ENCODE measurements at regions of chr6 and their contacts with region 1.

Region 1: DNA sequence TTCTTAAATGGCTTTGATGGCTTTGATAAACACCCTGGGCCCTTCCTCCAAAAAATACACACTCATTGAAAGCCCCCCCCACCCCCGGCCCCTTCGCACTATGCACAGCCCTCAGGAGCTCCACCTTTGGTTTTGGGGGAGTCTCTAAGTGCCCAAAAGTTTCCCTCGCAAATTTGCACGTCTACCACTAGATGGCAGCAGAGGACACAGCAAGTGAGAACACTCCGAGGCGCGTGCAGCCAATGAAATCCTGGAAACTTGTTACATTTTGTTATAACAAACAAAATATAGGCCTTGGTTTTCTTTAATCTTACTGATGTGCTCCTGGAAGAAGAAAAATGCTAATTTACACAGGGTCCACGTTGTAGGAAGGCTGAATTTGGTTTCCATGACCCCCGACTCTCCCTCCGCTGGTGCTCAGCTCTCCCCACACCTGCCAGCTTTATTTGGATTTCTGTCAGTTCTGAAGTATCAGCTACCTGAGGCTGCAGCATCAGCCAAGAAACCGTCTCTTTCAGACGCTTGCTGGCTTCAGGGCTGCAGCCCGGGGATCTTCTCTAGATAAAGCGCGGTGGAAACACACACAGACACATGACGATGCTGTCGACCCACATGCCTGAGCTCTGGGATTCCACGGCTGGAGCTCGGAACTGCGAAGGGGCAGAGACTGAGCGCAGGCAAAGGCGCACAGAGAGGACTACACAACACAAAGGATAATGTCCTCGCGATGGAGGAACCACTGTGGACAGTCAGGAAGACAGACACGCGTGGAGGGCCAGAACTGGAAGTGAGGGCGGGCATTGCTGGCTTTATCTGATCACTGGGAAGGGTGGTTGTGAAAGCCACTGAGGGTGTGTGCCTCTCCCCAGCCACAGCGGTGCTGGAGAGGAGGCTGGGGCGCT is 148.4 kb upstream of the RPS6KA2 start:
- DNase-seq: peak; percentile 53 to 66
- ATAC-seq: peak; percentile 74 to 87; a peak in 5 of 6 replicates
- H3K4me3 ChIP-seq: no peak overlapping the region
- H3K27ac ChIP-seq: no peak overlapping the region
- H3K4me1 ChIP-seq: no peaks in the 10 kb centered on the region
- CTCF ChIP-seq: peak; percentile 77
- EP300 ChIP-seq: no peak
- POLR2A ChIP-seq: no peak
- RAD21 ChIP-seq: peak; percentile 63 to 80

Region 2: DNA sequence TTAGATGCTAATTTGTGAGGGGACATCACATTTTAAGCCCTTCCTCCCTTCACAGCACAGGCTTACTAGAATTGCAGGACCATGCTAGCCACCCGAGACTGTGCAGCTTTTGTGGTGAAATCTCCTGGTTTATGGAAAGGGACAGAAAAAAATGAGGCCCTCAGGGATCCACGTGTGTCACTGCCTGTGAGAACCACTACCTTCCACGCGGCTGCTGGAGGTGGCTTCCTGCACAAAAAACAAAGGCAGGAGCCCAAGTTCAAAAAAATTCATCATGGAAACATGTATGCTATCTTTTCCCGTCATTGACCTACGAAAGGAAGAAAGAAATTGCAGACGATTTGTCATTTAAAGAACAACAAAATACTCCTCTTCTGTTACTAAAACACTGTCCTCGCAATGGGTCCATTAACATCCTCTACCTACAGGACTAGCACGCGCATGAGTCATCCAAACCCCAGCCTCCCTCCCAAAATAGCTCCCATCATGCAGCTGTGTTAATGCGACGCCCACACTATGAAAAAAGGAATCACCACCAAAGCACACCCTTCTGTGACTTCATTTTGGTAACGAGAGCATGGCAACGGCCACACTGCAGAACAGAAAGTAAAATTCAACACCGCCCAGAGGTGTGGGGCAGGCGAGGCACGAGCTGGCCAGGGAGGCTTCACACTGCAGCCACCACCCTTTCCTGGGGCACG is 234.7 kb before region 1 on chr6:
- CTCF ChIA-PET with region 1: no interaction called
- POLR2A ChIA-PET with region 1: no interaction called
- DNase-seq: no peak
- ATAC-seq: no peak
- H3K4me3 ChIP-seq: no peak overlapping the region
- H3K27ac ChIP-seq: no peak overlapping the region
- H3K4me1 ChIP-seq: no peaks in the 10 kb centered on the region
- CTCF ChIP-seq: no peak
- EP300 ChIP-seq: no peak
- POLR2A ChIP-seq: no peak
- RAD21 ChIP-seq: no peak

Region 3: DNA sequence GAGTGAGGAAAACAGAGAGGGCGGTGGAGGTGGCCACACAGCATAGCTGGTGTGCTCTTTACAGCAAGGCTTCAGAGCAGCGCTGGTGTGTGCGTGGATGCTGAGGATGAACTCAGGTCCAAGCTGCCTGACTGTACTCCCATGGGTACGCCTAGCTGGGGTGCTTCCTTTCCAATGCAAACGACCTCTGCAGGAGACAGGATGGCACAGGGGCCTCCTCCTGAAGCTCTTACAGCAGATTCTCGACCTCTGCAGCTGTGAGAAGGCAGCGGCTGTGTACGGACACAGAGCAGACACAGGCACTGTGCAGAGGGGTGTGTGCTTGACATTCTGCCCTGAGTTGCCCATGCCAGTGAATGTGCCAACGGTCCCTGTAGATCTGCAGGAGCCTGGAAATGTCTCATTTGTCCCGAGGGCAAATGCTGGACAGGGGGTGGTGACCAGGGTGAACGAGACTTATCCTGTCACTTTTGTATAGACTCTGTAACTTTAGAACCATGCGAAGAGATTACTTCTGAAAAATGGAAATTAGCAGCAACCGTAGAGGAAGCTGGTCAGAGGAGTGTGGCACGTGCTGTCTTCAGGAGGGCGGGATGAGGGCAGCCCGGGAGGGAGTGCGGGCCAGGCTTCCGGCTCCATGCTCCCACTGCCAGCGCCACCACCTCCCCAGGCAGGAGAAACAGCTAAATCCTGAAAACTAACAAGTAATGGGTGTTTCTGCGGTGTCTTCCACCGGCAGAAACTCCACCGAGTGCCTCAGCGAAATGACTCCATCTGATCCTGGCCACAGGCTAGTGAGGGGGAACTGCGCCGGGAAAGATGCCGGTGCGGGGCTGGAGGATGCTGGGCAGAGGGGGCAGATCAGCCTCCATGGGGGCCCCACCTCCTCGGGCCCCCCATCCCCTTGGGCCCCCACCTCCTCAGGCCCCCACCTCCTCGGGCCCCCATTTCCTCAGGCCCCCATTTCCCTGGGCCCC is 27.5 kb before region 1 on chr6:
- CTCF ChIA-PET with region 1: interaction called, 15 read pairs
- POLR2A ChIA-PET with region 1: no interaction called
- DNase-seq: peak in 1 of 2 experiments; percentile 14
- ATAC-seq: peak; percentile 54 to 73; a peak in 5 of 6 replicates
- H3K4me3 ChIP-seq: no peak overlapping the region
- H3K27ac ChIP-seq: no peak overlapping the region
- H3K4me1 ChIP-seq: no peaks in the 10 kb centered on the region
- CTCF ChIP-seq: no peak
- EP300 ChIP-seq: no peak
- POLR2A ChIP-seq: no peak
- RAD21 ChIP-seq: no peak

Region 4: GRCh38 chr6:166786704-166787293 is 11.4 kb after region 1 on chr6:
- CTCF ChIA-PET with region 1: interaction called, 15 read pairs
- POLR2A ChIA-PET with region 1: no interaction called
- DNase-seq: peak; percentile 31 to 63
- ATAC-seq: peak in 1 of 2 experiments; percentile 77; a peak in 4 of 6 replicates
- H3K4me3 ChIP-seq: no peak overlapping the region
- H3K27ac ChIP-seq: no peak overlapping the region
- H3K4me1 ChIP-seq: no peaks in the 10 kb centered on the region
- CTCF ChIP-seq: peak; percentile 62
- EP300 ChIP-seq: no peak
- POLR2A ChIP-seq: no peak
- RAD21 ChIP-seq: peak; percentile 59 to 64

Region 5: GRCh38 chr6:166981323-166981722 is 205.9 kb after region 1 on chr6:
- CTCF ChIA-PET with region 1: interaction called, 11 read pairs
- POLR2A ChIA-PET with region 1: no interaction called
- DNase-seq: no peak
- ATAC-seq: no peak
- H3K4me3 ChIP-seq: no peak overlapping the region
- H3K27ac ChIP-seq: no peak overlapping the region
- H3K4me1 ChIP-seq: no peaks in the 10 kb centered on the region
- CTCF ChIP-seq: no peak
- EP300 ChIP-seq: no peak
- POLR2A ChIP-seq: no peak
- RAD21 ChIP-seq: no peak

Region 6: GRCh38 chr6:167141667-167142432 is 366.4 kb after region 1 on chr6:
- CTCF ChIA-PET with region 1: interaction called, 32 read pairs
- POLR2A ChIA-PET with region 1: no interaction called
- DNase-seq: peak; percentile 21 to 29
- ATAC-seq: peak; percentile 96 to 97
- H3K4me3 ChIP-seq: no peak overlapping the region
- H3K27ac ChIP-seq: no peak overlapping the region
- H3K4me1 ChIP-seq: no peaks in the 10 kb centered on the region
- CTCF ChIP-seq: peak; percentile 52
- EP300 ChIP-seq: no peak
- POLR2A ChIP-seq: no peak
- RAD21 ChIP-seq: peak; percentile 65 to 77

Measured in A549 (cell line).